Dendritic cell treated with granulocyte-macrophage colony-stimulating factor and Interleukin-4, amounts not matched to agents 40 ng/mL and 50 ng/mL, for 4 days (primary cell): ENCODE measurements at regions of chr1 and their contacts with region 1.

Region 1: DNA sequence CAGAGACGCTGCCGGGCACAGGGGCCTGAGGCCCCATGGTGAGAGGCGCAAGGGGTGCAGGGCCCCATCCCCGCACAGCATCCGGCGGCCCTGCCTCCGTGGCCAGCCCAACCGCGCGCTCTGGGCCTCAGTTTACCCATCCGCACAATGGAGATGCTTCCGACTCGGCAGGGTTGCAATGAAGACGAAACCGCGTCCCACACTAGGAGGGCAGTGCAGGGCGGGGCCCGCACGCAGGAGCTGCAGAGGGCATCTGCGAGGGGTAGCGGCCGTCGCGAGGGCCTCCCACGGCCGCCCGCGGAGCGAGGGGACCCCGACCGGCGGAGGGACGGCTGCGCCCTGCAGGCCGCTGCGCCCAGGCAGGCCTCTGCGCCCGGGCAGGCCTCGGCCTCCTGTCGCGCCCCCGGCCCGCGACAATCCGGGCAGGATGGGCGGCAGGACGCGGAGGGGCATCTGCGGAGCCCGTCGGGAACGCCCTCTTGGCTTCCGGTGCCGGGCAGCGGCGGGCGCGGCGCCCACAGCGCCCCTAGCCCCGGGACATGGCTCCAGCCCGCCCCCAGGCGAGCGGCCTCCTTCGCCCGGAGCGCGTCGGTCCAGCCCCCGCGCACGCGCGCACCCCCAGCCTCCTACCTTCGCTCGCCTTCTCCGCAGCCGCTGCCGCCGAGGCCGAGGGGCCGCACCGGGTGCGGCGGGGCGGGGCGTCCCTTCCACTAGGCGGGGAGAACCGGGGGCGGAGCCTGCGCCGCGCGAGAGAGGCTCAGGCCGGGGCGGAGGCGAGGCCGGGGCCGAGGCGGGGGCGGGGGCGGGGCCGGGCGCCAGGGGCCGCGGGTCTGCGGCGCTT is 15.3 kb downstream of the RNU1-1 start:
- H3K4me3 Mint-ChIP-seq: peak overlapping the region; percentile 72
- H3K27ac Mint-ChIP-seq: peak overlapping the region; percentile 79
- H3K4me1 Mint-ChIP-seq: peaks cover 31% of the 10 kb centered on the region
- H3K27me3 Mint-ChIP-seq: peaks cover 11% of the 10 kb centered on the region

Region 2: DNA sequence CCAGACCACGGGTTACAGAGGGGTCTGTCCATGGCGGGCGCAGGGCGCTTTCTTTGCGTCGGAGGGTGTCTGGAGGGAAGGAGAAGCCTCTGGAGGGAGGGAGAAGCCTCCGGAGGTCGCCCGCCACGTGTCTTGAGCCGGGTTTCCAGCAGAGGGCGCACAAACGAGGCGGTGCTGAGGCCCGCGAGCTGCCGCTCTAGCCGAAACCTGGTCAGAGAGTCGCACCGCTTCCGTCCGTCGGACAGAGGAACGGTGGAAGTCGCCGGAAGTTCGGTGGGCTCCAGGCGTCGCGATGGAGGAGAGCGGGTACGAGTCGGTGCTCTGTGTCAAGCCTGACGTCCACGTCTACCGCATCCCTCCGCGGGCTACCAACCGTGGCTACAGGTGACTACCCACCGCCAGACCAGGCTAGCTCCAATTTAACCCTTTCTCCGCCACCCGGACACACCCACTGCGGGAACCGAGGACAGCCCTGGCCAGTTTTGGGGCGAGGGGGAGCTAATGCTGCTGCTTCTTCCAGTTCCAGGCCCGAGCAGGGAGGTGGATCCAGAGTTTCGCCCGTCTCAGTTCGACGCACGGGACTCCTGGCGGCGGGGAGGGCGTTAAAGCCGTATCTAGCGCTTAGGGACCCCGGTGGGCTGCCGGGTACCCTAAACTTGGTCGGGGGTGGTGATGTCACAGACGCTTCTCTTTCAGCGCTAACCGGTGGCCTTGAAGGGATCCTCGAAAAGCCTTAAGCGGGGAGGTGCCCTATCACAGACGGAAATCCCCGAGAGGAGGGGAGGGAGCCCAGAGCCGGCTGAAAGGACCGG is 58.1 kb before region 1 on chr1 and contains the start of gene NECAP2:
- intact Hi-C with region 1: loop called (anchors 5 kb)
- H3K4me3 Mint-ChIP-seq: peak within 1 kb of the TSS; percentile 88
- H3K27ac Mint-ChIP-seq: peak within 1 kb of the TSS; percentile 95
- H3K4me1 Mint-ChIP-seq: peaks cover 62% of the 10 kb centered on the region
- H3K27me3 Mint-ChIP-seq: no peaks in the 10 kb centered on the region

Region 3: GRCh38 chr1:16464903-16465625 is 33.7 kb before region 1 on chr1:
- intact Hi-C with region 1: no loop called
- H3K4me3 Mint-ChIP-seq: no peak overlapping the region
- H3K27ac Mint-ChIP-seq: no peak overlapping the region
- H3K4me1 Mint-ChIP-seq: peaks cover 18% of the 10 kb centered on the region
- H3K27me3 Mint-ChIP-seq: no peaks in the 10 kb centered on the region